A673 (cell line): ENCODE measurements at regions of chr14 and their contacts with region 1.

Region 1: GRCh38 chr14:100081997-100082625 is 16.9 kb downstream of the EVL start:
- DNase-seq: no peak
- H3K4me3 ChIP-seq: no peak overlapping the region
- H3K27ac ChIP-seq: no peak overlapping the region
- H3K4me1 ChIP-seq: peaks cover 18% of the 10 kb centered on the region
- H3K27me3 ChIP-seq: no peaks in the 10 kb centered on the region
- CTCF ChIP-seq: no peak

Region 2: DNA sequence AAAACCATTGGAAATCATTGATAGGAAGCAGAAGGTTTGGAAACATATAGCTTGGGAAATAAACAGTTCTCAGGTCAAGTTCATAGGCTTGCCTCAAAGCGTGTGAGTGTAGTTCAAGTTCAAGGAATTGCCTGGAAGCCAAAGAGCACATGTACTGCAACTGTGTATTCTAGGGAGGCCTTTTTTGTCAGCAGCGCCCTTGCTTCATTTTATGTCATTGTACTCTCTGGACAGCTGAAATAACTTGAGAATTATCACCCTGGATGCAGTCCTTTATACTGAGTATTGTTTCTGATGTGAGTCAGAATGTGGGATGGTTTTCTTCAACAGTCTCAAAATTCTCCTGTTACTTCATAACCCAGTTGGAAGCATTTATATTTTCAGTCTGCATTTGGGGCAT is 32.9 kb before region 1 on chr14:
- CTCF ChIA-PET with region 1: no interaction called
- POLR2A ChIA-PET with region 1: interaction called, 10 read pairs
- intact Hi-C with region 1: no loop called
- DNase-seq: no peak
- H3K4me3 ChIP-seq: no peak overlapping the region
- H3K27ac ChIP-seq: no peak overlapping the region
- H3K4me1 ChIP-seq: no peaks in the 10 kb centered on the region
- H3K27me3 ChIP-seq: no peaks in the 10 kb centered on the region
- CTCF ChIP-seq: no peak